Panc1 (cell line): ENCODE measurements at regions of chr2 and their contacts with region 1.

Region 1: GRCh38 chr2:38947240-38948239 is 57.9 kb downstream of the ARHGEF33 start:
- DNase-seq: peak; percentile 78
- ATAC-seq: peak; percentile 98
- H3K4me3 ChIP-seq: no peak overlapping the region
- H3K27ac ChIP-seq: no peak overlapping the region
- H3K4me1 ChIP-seq: 0 out of 2 replicates have a peak, but pooled peaks cover 5% of the 10 kb centered on the region
- H3K27me3 ChIP-seq: no peaks in the 10 kb centered on the region; the same call in 1 of the 2 replicates
- CTCF ChIP-seq: peak; percentile 87

Region 2: GRCh38 chr2:38734299-38735058 is 213.1 kb before region 1 on chr2:
- CTCF ChIA-PET with region 1: interaction called, 10 read pairs
- POLR2A ChIA-PET with region 1: no interaction called
- in situ Hi-C with region 1: no loop called
- intact Hi-C with region 1: no loop called
- DNase-seq: no peak
- ATAC-seq: peak; percentile 4; the same call in 1 of the 2 replicates
- H3K4me3 ChIP-seq: no peak overlapping the region
- H3K27ac ChIP-seq: no peak overlapping the region
- H3K4me1 ChIP-seq: no peaks in the 10 kb centered on the region
- H3K27me3 ChIP-seq: no peaks in the 10 kb centered on the region
- CTCF ChIP-seq: no peak

Region 3: DNA sequence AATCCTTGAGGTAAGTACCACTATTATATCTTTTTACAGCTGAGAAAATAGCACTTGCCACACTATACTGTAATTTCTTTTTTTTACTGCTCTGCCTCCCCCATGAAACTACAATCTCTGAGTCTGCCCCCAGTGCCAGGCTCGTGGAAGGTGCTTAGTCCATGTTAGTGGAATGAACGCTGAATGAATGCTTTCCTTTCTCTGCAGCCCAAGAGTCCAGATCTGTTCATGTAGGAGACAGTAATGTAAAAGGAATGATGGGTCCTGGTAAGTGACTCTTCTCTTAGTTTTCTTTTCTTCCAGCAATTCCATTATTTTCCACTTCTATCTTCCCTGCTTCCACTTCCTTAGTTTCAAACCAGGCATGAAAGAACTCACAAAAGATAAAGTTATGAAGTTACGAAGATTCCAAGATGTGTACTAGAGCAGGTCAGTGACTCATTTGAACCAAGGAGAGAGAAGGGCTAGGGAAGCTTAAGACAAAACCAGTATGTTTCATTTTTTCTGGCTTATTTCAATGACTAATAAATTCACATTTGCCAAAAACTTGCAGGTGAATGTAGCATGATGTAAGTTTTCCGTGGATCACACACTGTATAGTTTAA is 11.9 kb before region 1 on chr2:
- CTCF ChIA-PET with region 1: interaction called, 9 read pairs
- POLR2A ChIA-PET with region 1: interaction called, 24 read pairs
- in situ Hi-C with region 1: no loop called
- intact Hi-C with region 1: no loop called
- DNase-seq: no peak
- ATAC-seq: no peak
- H3K4me3 ChIP-seq: no peak overlapping the region
- H3K27ac ChIP-seq: no peak overlapping the region
- H3K4me1 ChIP-seq: no peaks in the 10 kb centered on the region
- H3K27me3 ChIP-seq: no peaks in the 10 kb centered on the region
- CTCF ChIP-seq: no peak